PC-9 (cell line): ENCODE measurements at regions of chr10 and their contacts with region 1.

Region 1: DNA sequence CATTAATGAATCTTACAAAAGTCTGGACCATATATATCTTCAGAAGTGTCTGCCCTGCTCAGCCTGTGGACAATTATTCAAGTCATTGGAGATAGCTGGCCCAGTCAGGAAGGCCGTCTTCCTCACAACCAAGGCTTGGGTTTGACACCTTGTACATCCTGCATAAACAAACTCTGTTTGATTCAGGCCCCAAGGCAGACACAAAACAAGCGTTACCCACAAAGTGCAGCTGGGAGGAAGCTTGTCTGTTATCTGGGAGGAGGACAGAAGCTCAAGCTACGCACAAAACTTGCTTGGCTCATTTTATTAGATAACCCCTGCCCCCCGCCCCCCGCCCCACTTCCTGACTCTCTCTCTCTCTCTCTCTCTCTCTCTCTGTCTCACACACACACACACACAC is 166.9 kb upstream of the WDR11 start:
- DNase-seq: no peak
- H3K4me3 ChIP-seq: no peak overlapping the region
- H3K27ac ChIP-seq: no peak overlapping the region
- H3K4me1 ChIP-seq: no peaks in the 10 kb centered on the region
- H3K27me3 ChIP-seq: no peaks in the 10 kb centered on the region
- CTCF ChIP-seq: no peak

Region 2: GRCh38 chr10:119588071-119588470 is 1096.2 kb before region 1 on chr10:
- CTCF ChIA-PET with region 1: no interaction called
- POLR2A ChIA-PET with region 1: no interaction called
- intact Hi-C with region 1: no loop called
- DNase-seq: no peak
- H3K4me3 ChIP-seq: no peak overlapping the region
- H3K27ac ChIP-seq: no peak overlapping the region
- H3K4me1 ChIP-seq: peaks cover 14% of the 10 kb centered on the region
- H3K27me3 ChIP-seq: no peaks in the 10 kb centered on the region
- CTCF ChIP-seq: no peak

Region 3: GRCh38 chr10:120555842-120556532 is 128.2 kb before region 1 on chr10:
- CTCF ChIA-PET with region 1: no interaction called
- POLR2A ChIA-PET with region 1: interaction called, 12 read pairs
- intact Hi-C with region 1: no loop called
- DNase-seq: no peak
- H3K4me3 ChIP-seq: no peak overlapping the region
- H3K27ac ChIP-seq: no peak overlapping the region
- H3K4me1 ChIP-seq: no peaks in the 10 kb centered on the region
- H3K27me3 ChIP-seq: no peaks in the 10 kb centered on the region
- CTCF ChIP-seq: no peak

Region 4: GRCh38 chr10:121104476-121105111 is 420.4 kb after region 1 on chr10:
- CTCF ChIA-PET with region 1: no interaction called
- POLR2A ChIA-PET with region 1: no interaction called
- intact Hi-C with region 1: no loop called
- DNase-seq: no peak
- H3K4me3 ChIP-seq: no peak overlapping the region
- H3K27ac ChIP-seq: no peak overlapping the region
- H3K4me1 ChIP-seq: no peaks in the 10 kb centered on the region
- H3K27me3 ChIP-seq: no peaks in the 10 kb centered on the region
- CTCF ChIP-seq: no peak

Region 5: DNA sequence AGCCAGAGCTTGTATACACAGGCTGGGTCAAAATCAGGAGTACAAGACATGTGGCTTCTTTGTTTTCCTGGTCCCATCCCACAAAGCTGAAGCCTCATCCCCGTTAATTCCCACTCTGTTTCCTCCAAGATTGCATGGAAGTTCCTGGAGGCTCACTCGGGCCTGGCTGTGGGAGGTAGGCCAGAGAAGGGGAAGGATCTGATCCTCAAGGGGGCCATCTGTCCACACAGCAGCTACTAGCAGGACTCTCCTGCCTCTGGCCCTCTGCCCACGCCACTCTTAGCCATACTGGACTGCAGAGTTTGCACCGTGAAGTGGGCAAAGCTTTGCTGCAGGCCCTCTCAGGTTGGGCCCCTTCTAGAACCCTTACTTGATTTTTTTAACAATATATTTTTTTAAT is 753.4 kb after region 1 on chr10:
- CTCF ChIA-PET with region 1: no interaction called
- POLR2A ChIA-PET with region 1: no interaction called
- intact Hi-C with region 1: no loop called
- DNase-seq: no peak
- H3K4me3 ChIP-seq: no peak overlapping the region
- H3K27ac ChIP-seq: no peak overlapping the region
- H3K4me1 ChIP-seq: no peaks in the 10 kb centered on the region
- H3K27me3 ChIP-seq: peaks cover 30% of the 10 kb centered on the region
- CTCF ChIP-seq: no peak